ENCODE measurements at regions of chr10 and their contacts with region 1.

Region 1: DNA sequence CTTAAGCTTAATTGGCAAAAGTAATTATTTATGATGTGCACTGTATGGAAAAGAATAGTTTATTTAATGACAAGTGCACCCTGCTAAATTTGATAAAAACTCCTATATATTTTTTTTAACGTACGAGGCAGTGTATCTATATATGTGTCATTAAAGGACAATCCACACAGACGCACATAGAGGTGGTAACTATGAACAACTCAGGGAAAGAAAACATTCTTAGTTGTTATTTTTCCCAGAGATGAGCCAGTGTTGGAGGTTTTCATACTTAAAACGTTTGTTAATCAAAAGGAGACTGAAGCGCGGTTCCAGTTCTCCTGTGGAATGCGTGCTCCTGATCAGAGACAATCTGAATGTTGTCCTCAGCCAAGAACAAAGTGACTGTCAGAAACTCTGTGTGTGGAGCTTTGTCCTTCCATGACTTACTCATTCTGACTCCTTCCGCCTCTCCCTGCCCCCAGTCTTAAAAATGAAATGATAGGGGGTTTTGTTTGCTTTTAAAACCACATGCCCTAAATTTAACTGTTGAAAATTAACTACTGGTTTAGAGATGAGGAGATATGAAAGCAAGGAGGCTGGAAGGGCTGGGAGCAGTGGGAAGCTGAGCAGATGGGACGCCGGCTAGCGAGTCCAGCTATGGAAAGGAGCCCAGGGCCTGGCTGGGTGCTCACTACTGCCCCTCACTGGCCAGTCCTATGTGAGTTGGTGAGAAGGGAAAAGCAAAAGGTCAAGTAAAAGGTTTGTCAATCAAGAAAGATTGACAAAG is 99.6 kb downstream of the SVIL start:
- DNase-seq: peak; percentile 81
- H3K4me3 ChIP-seq: no peak overlapping the region
- H3K27me3 ChIP-seq: peaks cover 10% of the 10 kb centered on the region
- CTCF ChIP-seq: peak; percentile 94

Region 2: GRCh38 chr10:29517352-29517923 is 17.8 kb before region 1 on chr10:
- CTCF ChIA-PET with region 1: interaction called, 24 read pairs
- POLR2A ChIA-PET with region 1: no interaction called
- DNase-seq: no peak
- H3K4me3 ChIP-seq: no peak overlapping the region
- H3K27me3 ChIP-seq: no peaks in the 10 kb centered on the region
- CTCF ChIP-seq: peak; percentile 72

Region 3: DNA sequence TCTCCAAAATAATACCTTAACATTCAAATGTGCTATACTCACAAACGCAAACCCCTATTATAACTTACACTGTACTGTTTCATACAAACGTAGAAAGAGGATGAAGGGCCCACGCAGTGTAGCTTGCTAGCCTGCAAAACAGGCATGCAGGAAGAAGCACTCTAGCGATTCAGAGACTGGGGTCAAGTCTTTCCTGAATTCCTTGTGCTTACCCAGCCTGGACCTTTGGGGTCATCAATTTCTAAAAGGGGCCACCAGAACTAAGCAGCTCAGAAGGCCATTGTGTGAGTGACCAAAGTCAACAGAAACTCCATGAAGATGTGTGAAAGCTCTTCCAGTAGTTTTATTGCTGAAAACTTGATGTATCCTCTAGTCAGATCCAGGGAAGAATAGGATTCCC is 12.3 kb before region 1 on chr10:
- CTCF ChIA-PET with region 1: interaction called, 25 read pairs
- POLR2A ChIA-PET with region 1: no interaction called
- DNase-seq: no peak
- H3K4me3 ChIP-seq: no peak overlapping the region
- H3K27me3 ChIP-seq: no peaks in the 10 kb centered on the region
- CTCF ChIP-seq: no peak

Region 4: DNA sequence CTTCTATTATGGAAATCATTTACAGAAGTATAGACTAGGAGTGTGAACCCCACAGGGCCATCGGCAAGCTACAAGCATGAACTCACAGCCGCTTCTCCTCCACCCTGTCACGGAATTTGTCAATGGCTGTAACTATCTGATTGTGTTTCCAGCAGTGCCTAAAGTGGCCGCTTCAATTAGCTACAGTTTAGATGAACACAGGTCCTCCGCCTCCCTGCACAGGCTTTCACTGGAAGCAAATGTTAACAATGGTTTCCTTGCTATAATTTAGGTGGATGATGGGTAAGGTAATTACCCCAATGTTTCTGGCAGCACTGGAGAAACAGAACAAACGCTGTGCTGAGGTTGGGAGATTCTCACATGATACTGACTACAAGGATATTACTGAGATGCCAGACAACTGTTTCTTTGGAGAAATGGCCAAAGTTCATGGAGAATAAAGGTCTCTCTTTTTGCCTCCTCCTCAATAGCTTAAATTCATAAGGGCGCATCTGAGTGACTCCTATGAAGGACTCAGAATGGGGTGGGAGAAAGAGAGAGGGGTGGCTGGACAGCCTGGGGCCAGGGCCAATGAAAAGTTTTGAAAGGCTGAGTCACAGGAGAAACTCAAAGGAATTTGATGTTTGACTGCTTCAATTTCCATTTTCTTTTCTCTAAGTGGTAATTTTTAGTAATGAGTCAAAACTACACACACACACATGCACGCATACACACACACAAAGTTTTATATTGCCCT is 20.7 kb after region 1 on chr10:
- CTCF ChIA-PET with region 1: interaction called, 19 read pairs
- POLR2A ChIA-PET with region 1: no interaction called
- DNase-seq: peak; percentile 39
- H3K4me3 ChIP-seq: no peak overlapping the region
- H3K27me3 ChIP-seq: no peaks in the 10 kb centered on the region
- CTCF ChIP-seq: no peak

Region 5: GRCh38 chr10:29590915-29591650 is 55.9 kb after region 1 on chr10:
- CTCF ChIA-PET with region 1: interaction called, 10 read pairs
- POLR2A ChIA-PET with region 1: no interaction called
- DNase-seq: no peak
- H3K4me3 ChIP-seq: no peak overlapping the region
- H3K27me3 ChIP-seq: no peaks in the 10 kb centered on the region
- CTCF ChIP-seq: no peak